GM10248 (cell line): ENCODE measurements at regions of chr12 and their contacts with region 1.

Region 1: GRCh38 chr12:49288412-49288853 is 6.5 kb upstream of the PRPH start:
- DNase-seq: peak; percentile 81
- CTCF ChIP-seq: peak; percentile 82

Region 2: GRCh38 chr12:49274396-49275286 is 13.8 kb before region 1 on chr12:
- CTCF ChIA-PET with region 1: interaction called, 25 read pairs
- POLR2A ChIA-PET with region 1: interaction called, 3 read pairs
- DNase-seq: no peak
- CTCF ChIP-seq: no peak

Region 3: DNA sequence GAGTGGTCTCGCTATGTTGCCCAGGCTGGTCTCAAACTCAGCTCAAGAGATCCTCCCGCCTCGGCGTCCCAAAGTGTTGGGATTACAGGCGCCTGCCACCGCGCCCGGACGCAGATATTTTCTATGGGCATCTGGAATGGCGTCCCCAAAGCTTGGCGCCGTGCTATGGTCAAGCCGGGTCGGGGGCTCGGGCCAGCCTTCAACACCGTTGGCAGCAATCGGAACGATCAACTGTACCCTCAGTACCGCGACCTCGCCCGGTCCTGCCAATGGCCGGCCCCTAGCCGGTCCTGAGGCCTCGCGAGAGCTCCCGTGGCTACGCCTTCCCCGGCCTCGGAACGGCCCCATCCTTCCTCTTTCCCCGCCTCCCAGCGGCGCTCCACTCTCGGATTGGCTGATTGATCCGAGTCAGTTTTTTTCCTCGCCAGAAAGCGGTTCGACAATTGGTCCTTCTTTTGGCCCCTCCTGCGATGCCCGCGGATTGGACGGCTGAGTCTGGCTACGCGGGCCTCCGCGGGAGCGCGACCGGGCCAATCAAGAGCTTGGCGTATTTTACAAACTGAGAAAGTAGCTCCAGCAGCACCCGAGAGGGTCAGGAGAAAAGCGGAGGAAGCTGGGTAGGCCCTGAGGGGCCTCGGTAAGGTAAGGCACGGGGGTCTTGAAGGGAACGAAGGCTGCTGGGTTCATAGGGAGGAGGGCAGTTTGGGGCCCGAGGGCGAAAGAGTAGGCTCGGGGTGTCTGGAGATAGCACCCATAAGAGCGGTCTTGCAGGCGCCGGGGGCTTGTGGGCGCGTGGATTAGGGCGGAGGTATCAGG is 34.5 kb after region 1 on chr12 and contains the start of gene TROAP:
- CTCF ChIA-PET with region 1: interaction called, 17 read pairs
- POLR2A ChIA-PET with region 1: no interaction called
- DNase-seq: peak; percentile 99
- CTCF ChIP-seq: no peak

Region 4: GRCh38 chr12:49336645-49337584 is 48.5 kb after region 1 on chr12 and contains the start of gene C1QL4:
- CTCF ChIA-PET with region 1: interaction called, 174 read pairs
- POLR2A ChIA-PET with region 1: no interaction called
- DNase-seq: peak; percentile 89
- CTCF ChIP-seq: peak; percentile 88

Region 5: DNA sequence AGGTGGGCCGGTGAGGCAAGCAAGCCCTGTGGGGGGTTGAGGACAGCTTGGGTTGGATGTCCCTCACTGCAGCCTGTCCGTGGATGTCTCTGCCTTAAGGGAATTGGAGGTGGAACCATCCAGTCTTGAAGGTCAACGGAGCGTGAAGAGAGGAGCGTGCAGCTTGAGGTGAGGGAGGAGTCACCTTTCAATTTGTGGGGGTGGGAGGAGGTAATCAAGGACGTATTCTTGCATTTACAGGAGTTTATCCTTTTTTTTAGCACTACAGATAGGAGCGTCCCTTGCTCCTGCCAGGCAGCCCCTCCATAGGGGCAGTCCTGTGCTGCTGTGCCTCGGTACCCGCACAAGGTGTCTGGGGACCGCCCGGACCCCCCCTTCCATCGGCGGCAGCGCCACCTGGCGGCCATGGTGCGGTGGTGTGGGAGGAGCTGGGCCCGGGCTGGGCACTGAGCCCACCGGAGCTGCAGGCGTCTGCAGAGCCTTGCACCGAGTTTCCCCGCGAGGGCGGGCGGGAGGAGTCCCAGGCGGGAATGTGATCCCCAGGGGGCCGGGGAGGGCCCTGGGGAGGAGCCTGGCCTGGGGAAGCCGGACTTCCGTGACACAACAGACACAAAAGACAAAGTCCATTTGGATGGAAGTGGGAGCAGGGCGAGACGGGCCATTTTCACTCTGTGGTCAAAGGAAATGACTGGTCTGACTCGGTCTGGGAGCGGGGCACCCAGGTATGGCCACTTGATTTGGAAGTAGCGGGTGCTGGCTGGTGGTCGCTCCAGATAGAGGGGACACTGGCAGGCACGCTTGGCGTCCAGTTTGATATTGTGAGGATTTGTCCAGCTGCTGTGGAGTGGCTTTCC is 59.2 kb after region 1 on chr12:
- CTCF ChIA-PET with region 1: interaction called, 239 read pairs
- POLR2A ChIA-PET with region 1: no interaction called
- DNase-seq: peak; percentile 90
- CTCF ChIP-seq: peak; percentile 95

Region 6: GRCh38 chr12:49503674-49504180 is 215.3 kb after region 1 on chr12:
- CTCF ChIA-PET with region 1: interaction called, 10 read pairs
- POLR2A ChIA-PET with region 1: interaction called, 11 read pairs
- DNase-seq: no peak
- CTCF ChIP-seq: no peak

Region 7: DNA sequence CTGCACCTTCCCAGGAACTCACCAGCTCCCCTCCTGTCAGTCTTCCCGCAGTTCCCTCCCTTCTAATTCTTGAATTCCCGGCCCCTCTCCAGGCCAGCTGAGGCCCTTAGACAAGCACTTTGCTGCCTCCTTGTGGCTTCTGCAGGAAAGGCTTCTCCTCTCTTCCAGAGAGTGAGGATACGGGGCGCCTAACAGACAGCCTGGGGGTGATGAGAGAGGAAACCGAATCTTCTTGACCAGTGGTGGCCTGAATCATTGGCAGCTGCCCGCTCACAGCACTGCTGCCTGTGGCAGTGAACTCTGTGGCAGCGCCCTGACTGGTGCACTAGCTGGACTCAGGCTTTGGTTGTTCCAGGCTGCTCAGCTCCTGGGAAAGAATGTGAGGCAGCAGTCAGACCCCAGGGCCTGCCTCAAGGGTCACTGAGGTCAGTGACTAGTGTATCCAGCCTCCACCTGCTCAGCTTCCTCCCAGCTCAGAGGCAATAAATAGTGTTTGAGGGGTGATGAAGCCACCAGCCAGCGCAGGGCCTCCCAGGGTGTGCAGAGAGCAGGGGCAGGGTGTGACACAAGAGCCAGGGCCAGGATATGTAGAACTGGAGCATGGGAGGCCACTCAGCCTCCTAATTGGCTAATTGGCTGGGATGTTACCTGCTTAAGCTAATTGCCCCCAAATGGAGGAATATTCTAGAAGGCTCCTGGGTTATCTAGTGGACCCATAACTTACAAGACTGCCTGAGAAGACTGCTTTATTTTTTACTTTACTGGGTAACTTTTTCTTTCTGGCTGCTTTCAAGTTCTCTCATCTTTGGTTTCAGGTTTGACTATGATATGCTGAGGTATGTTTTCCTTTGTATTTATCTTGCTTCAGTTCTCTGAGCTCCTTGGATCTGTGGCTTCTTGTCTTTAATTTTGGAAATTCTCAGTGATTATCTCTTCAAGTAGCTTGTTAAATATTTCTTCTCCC is 292.4 kb after region 1 on chr12:
- CTCF ChIA-PET with region 1: interaction called, 10 read pairs
- POLR2A ChIA-PET with region 1: no interaction called
- DNase-seq: peak; percentile 79
- CTCF ChIP-seq: peak; percentile 91